Left ventricle myocardium inferior (tissue), 1 donor: ENCODE measurements at regions of chr5 and their contacts with region 1.

Region 1: DNA sequence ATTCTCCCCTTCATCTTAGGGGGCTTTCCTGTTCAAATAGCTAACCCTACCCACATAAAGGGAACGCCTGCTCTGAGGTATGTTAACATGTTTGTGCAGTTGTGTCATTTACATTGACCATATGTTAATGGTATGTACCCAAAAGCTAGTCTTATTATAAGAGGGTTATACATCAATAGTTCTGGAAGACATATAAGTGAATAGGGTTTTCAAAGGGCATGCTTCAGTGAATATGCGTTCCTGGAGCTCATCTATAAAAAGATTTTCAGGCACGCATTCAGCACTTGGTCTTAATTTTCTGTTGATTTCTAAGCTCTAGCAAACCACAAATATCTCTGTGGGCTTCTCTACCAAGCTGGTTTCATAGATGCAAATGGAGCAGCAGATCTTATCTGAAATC is 766.1 kb downstream of the IRX1 start:
- DNase-seq: no peak
- H3K4me3 ChIP-seq: no peak overlapping the region
- H3K27ac ChIP-seq: no peak overlapping the region
- H3K4me1 ChIP-seq: no peaks in the 10 kb centered on the region
- H3K27me3 ChIP-seq: peaks cover 21% of the 10 kb centered on the region
- CTCF ChIP-seq: no peak

Region 2: DNA sequence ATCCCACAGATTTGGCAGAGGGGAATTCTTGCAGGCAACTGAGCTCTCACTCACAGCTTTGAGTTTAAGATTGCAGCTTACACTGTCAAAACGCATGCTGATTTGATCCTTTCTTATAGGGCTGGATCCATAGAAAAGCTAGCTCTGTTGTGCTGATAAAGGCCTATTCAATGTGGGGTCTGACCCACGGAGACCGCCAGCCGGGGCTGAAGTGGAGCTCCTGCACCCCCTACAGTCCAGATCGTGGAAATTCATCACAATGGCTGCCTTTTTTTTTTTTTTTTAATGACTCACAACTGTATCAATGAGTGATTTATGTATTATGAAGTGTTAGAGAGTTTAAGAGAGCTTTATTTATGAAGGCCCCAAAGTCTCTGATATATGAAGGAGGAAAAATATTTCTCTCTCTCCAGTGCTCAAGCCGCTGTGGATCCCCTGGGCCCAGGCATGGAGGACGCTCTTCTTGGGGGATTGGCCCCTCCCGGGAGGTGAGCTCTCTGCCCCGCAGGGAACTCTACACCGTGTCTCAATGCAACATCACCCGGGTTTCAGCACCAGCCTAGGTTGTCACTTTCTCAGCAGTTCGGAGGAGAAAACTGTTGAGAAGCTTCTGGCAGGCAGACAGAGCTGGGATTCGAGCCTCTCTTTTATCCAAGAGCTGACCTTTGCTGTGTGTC is 66.0 kb before region 1 on chr5:
- intact Hi-C with region 1: no loop called
- DNase-seq: no peak
- H3K4me3 ChIP-seq: no peak overlapping the region
- H3K27ac ChIP-seq: no peak overlapping the region
- H3K4me1 ChIP-seq: no peaks in the 10 kb centered on the region
- H3K27me3 ChIP-seq: peaks cover 21% of the 10 kb centered on the region
- CTCF ChIP-seq: peak; percentile 67

Region 3: GRCh38 chr5:5183189-5183699 is 821.5 kb after region 1 on chr5:
- intact Hi-C with region 1: loop called (anchors 10 kb)
- DNase-seq: no peak
- H3K4me3 ChIP-seq: no peak overlapping the region
- H3K27ac ChIP-seq: no peak overlapping the region
- H3K4me1 ChIP-seq: no peaks in the 10 kb centered on the region
- H3K27me3 ChIP-seq: peaks cover 36% of the 10 kb centered on the region
- CTCF ChIP-seq: no peak